Motor neuron (in vitro differentiated cells): ENCODE measurements at regions of chr3 and their contacts with region 1.

Region 1: GRCh38 chr3:64023187-64023848 is at the start of gene PSMD6:
- ATAC-seq: peak; percentile 90 to 94 (median 92)
- H3K4me3 ChIP-seq: peak within 1 kb of the TSS; percentile 79 to 95 (median 80)
- H3K27ac ChIP-seq: peak within 1 kb of the TSS; percentile 77 to 91
- H3K4me1 ChIP-seq: peaks cover 21 to 26% of the 10 kb centered on the region in 2 donors
- total RNA-seq, gene PSMD6: 77.9 to 140 (median 105) TPM

Region 2: GRCh38 chr3:63655519-63655918 is 367.8 kb before region 1 on chr3:
- in situ Hi-C with region 1: no loop called
- ATAC-seq: no peak
- H3K4me3 ChIP-seq: no peak overlapping the region
- H3K27ac ChIP-seq: no peak overlapping the region
- H3K4me1 ChIP-seq: peaks cover 0 to 6% of the 10 kb centered on the region in 2 donors

Region 3: DNA sequence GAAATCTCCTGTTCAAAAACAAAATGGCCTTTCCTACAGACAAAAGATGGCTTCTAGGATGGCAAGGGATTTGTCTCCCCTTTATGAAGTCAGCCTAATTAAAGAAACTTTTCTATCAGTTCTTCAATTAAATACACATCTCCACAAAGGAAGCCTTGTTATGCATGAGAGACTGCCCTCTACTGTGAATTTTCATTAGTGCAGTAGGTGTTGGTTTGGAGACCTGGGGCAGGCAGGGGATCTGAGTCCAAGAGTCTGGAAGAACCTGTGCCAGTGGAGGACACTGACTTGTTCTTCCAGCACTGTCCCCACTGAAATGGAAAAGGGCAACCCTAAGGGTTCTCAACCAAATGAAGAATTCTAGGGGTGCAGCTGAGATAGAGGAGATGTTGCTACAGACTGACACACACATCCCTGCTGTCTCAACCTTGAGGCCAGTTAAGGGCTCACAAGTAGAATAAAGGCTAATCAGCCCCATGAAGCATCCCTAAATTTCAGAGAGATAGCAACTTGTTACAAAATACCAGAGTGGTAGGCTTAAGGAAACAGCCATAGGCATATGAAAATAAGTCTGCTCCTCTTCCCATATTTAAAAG is 376.0 kb after region 1 on chr3:
- in situ Hi-C with region 1: loop called in 3 of 9 experiments (anchors 10 to 25 kb)
- ATAC-seq: peak in 4 of 8 experiments; percentile 58 to 80 (median 74)
- H3K4me3 ChIP-seq: no peak overlapping the region
- H3K27ac ChIP-seq: no peak overlapping the region
- H3K4me1 ChIP-seq: peaks cover 17 to 30% of the 10 kb centered on the region in 2 donors

Region 4: DNA sequence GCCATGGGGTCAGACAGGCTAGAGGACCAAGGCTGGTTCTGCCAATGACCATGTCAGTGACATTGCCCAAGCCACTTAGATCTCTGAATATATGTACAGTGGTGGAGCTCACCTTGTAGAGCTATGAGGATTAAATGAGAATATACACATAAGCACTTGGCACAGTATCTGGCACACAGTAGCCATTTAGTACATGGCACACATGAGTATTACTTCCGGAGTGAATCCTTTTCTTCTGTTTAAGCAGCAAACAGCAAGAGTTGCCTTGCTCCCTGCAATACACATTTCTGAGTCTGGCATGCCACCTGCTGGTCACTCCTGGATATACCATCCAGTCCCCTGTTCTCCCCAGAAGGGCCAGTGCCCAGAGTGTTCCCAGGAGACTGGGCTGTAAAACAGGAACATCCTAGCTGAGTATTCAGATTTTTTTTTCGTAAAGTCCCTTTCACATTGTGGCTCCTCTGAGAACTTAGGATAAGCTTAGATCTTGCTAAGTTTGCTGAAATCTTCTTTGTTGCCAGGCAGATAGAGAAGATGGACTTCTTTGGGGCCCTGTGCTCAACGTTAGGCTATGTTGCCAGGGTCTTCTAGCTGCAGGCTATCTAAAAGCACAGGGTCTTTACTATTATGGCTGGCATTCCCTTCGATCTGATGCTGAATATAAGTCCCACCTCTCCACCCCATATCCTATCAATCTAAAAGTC is 461.1 kb after region 1 on chr3:
- in situ Hi-C with region 1: loop called in 5 of 9 experiments (anchors 10 to 25 kb)
- ATAC-seq: peak; percentile 65 to 93 (median 76)
- H3K4me3 ChIP-seq: no peak overlapping the region
- H3K27ac ChIP-seq: no peak overlapping the region
- H3K4me1 ChIP-seq: peaks cover 7 to 16% of the 10 kb centered on the region in 2 donors